Ascending aorta (tissue), 2 donors: ENCODE measurements at regions of chr1 and their contacts with region 1.

Region 1: DNA sequence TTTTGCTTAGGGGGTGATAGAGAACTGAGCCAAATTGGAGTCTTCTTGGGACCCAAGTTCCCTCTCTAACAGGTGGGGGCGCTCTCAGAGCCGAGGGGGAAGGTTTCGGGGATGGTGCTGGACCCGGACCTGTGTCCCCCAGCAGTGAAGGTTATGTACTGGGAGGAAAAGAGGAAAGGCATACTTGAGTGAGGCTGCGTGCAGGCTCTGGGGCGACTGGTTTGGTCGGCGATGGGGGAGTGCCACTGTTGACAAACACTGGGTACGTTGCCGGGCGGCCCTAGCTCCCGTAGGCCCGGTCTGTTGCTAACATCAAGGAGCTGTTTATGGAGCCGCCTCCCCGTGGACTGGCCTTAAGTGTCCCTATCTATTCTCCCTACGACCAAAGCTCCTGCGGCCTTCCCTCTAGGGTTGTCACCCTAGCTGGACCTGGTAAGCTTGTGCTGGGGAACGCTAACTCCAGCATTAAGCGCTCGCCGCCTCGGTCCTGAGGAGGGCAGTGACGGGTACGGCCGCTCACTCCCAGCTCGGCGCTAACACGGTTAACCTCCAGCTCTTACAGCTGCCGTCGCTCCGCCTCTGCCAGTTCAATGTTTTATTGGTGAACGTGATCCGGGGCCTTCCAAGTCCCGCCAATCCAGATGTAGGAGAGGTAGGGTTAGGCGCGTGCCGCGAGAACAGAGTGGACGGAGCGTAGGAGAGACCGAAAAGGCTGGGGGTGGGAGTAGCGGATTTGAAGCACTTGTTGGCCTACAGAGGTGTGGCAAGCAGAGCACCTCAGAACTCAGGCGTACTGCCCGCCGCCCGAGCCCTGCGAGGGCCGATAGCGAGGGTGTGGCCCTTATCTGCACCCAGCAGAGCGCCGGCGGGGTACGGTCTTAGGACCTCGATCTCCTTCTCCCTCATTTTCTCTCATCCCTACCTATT is at the start of gene PPOX:
- DNase-seq: peak; percentile 94 to 98
- H3K4me3 ChIP-seq: peak within 1 kb of the TSS; percentile 62 to 86
- H3K27ac ChIP-seq: peak within 1 kb of the TSS; percentile 69 to 90
- H3K4me1 ChIP-seq: peaks cover 6 to 12% of the 10 kb centered on the region in 2 donors
- H3K27me3 ChIP-seq: no peaks in the 10 kb centered on the region
- CTCF ChIP-seq: peak; percentile 11 to 48 (median 33)
- total RNA-seq, gene PPOX: 4.8 TPM

Region 2: DNA sequence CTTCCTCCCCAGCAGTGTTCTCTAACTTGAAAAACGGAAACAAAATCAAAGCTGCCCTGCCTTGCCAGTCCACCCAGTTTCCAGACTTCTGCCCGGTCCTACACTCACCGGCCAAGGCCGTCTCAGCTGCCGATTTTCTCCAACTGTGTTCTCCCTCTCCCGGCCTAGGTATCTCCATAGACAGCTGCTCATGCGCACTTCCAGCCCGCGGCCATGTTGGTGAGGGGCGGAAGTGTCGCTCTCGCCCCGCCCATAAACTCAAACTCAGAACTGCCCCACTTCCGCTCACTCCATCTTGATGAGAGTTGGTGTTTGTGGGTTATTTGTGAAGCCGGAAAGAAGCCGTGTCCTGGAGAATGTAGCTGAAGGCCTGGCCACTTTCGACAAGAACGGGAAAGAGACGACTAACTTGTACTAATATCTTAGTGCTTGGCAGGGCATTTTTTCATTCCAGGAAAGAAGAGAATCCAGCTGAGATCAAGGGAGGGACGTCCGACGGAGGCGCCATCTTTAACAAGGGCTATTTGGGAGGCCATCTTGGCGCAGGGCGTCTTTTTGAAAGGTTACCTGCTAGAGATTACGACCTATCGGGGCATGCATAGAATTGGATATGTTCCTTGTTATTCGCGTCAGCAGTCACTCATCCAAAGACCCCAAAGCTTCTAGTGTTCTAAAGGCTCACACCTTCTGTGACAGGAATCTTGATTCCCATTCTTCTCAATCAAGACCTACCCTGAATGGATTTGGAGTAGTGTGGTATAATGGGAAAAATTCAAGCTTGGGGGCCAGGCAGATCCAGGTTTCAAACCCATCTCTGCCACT is 120.0 kb before region 1 on chr1 and contains the start of gene USF1:
- intact Hi-C with region 1: loop called (anchors 10 kb)
- DNase-seq: peak; percentile 79 to 97
- H3K4me3 ChIP-seq: peak within 1 kb of the TSS; percentile 63 to 95
- H3K27ac ChIP-seq: peak within 1 kb of the TSS; percentile 93 to 96
- H3K4me1 ChIP-seq: peaks cover 6 to 13% of the 10 kb centered on the region in 2 donors
- H3K27me3 ChIP-seq: no peaks in the 10 kb centered on the region
- CTCF ChIP-seq: no peak
- total RNA-seq, gene USF1: 68.5 TPM